Activated B cell treated with CpG ODN at 0.5 μM for 24 hours (primary cell): ENCODE measurements at regions of chr19 and their contacts with region 1.

Region 1: GRCh38 chr19:35347171-35347929 is at the start of gene FFAR1:
- DNase-seq: peak; percentile 64
- ATAC-seq: peak; percentile 66
- H3K4me3 Mint-ChIP-seq: peak within 1 kb of the TSS; percentile 74
- H3K27ac Mint-ChIP-seq: peak within 1 kb of the TSS; percentile 98
- H3K4me1 Mint-ChIP-seq: peaks cover 84% of the 10 kb centered on the region
- H3K27me3 Mint-ChIP-seq: peaks cover 2% of the 10 kb centered on the region
- CTCF ChIP-seq: no peak
- total RNA-seq, gene FFAR1: 5.1 and 6.0 TPM in 2 replicates

Region 2: GRCh38 chr19:35044317-35045117 is 302.8 kb before region 1 on chr19:
- CTCF ChIA-PET with region 1: no interaction called
- POLR2A ChIA-PET with region 1: no interaction called
- intact Hi-C with region 1: no loop called
- DNase-seq: peak; percentile 49
- ATAC-seq: no peak
- H3K4me3 Mint-ChIP-seq: no peak overlapping the region
- H3K27ac Mint-ChIP-seq: no peak overlapping the region
- H3K4me1 Mint-ChIP-seq: peaks cover 33% of the 10 kb centered on the region
- H3K27me3 Mint-ChIP-seq: peaks cover 3% of the 10 kb centered on the region
- CTCF ChIP-seq: peak; percentile 92

Region 3: DNA sequence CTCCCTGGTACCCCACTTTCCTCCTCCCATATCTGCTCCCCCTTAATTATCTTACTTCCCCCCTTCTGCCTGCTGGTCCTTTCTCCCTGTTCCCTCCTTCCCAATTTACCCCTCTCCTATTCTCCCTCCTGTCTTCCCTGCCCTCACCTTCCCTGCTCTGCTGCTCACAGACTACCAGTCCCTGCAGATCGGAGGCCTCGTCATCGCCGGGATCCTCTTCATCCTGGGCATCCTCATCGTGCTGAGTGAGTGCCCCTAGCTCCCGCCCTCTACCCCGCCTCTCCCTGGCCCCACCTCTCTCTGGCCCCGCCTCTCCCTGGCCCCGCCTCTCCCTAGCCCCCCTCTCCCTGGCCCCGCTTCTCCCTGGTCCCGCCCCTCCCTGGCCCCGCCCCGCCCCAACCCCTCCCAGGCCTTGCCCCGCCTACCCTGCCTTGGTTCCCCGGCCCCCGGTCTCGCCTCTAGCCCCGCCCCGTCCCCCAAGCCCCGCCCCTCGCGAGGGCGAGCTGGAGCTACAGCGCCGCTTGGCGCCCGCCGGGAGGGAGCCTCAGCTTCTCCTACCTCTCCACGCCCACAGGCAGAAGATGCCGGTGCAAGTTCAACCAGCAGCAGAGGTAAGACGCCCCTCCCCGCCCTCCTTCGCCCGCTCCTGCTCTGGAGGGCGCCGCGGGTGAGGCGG is 206.2 kb before region 1 on chr19:
- CTCF ChIA-PET with region 1: interaction called, 6 read pairs
- POLR2A ChIA-PET with region 1: interaction called, 23 read pairs
- intact Hi-C with region 1: loop called (anchors 2 kb)
- DNase-seq: peak; percentile 87
- ATAC-seq: peak; percentile 86
- H3K4me3 Mint-ChIP-seq: peak overlapping the region; percentile 87
- H3K27ac Mint-ChIP-seq: peak overlapping the region; percentile 77
- H3K4me1 Mint-ChIP-seq: peaks cover 40% of the 10 kb centered on the region
- H3K27me3 Mint-ChIP-seq: no peaks in the 10 kb centered on the region
- CTCF ChIP-seq: no peak

Region 4: DNA sequence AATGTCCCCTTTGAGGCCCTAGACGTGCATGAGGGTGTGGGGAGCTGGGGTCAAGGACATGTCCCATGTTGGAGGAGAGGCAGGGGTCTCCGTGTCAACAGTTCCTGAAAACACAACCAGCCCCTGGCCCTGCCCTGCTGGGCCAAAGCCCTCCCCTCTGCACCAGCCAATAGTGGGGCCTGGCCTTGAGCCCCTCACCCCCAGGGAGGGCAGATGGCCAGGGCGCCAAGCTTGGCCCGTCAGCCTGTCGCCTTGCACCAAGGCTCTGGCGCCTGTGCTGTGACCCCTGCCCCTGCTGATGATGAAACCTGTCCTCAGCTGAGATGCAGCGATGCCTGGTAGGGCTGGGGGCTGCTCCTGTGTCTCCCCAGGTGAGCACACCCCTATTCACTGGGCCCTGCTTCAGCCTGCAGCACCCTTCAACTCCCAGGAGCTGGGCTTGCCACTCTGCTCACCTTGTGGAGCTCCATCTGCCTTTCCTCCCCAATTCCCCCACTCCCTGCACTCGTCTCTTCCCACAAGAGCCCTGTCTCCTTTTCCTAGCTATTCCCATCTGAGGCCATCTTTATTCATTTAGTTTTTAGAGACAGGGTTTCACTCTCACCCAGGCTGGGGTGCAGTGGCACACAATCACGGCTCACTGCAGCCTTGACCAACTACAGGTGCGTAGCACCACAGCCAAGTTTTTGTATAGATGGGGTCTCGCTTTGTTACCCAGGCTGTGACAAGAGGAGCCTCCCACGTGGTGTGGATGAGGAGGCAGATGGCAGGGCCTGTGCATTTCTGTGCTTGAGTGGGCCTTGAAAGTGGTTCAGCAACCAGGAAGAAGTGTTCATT is 67.1 kb before region 1 on chr19:
- CTCF ChIA-PET with region 1: interaction called, 3 read pairs
- POLR2A ChIA-PET with region 1: interaction called, 26 read pairs
- intact Hi-C with region 1: no loop called
- DNase-seq: no peak
- ATAC-seq: peak; percentile 33
- H3K4me3 Mint-ChIP-seq: no peak overlapping the region
- H3K27ac Mint-ChIP-seq: peak overlapping the region; percentile 75
- H3K4me1 Mint-ChIP-seq: peaks cover 45% of the 10 kb centered on the region
- H3K27me3 Mint-ChIP-seq: no peaks in the 10 kb centered on the region
- CTCF ChIP-seq: no peak

Region 5: GRCh38 chr19:35330475-35330874 is 16.9 kb before region 1 on chr19:
- CTCF ChIA-PET with region 1: interaction called, 37 read pairs
- POLR2A ChIA-PET with region 1: interaction called, 645 read pairs
- intact Hi-C with region 1: loop called (anchors 1 kb)
- DNase-seq: peak; percentile 76
- ATAC-seq: peak; percentile 81
- H3K4me3 Mint-ChIP-seq: peak overlapping the region; percentile 90
- H3K27ac Mint-ChIP-seq: peak overlapping the region; percentile 94
- H3K4me1 Mint-ChIP-seq: peaks cover 85% of the 10 kb centered on the region
- H3K27me3 Mint-ChIP-seq: no peaks in the 10 kb centered on the region
- CTCF ChIP-seq: no peak

Region 6: GRCh38 chr19:35468637-35469036 is 121.3 kb after region 1 on chr19:
- CTCF ChIA-PET with region 1: interaction called, 99 read pairs
- POLR2A ChIA-PET with region 1: interaction called, 76 read pairs
- intact Hi-C with region 1: loop called (anchors 1 kb)
- DNase-seq: peak; percentile 51
- ATAC-seq: peak; percentile 100
- H3K4me3 Mint-ChIP-seq: no peak overlapping the region
- H3K27ac Mint-ChIP-seq: no peak overlapping the region
- H3K4me1 Mint-ChIP-seq: peaks cover 14% of the 10 kb centered on the region
- H3K27me3 Mint-ChIP-seq: no peaks in the 10 kb centered on the region
- CTCF ChIP-seq: peak; percentile 39